WTC11 (cell line): ENCODE measurements at regions of chr20 and their contacts with region 1.

Region 1: GRCh38 chr20:21615617-21616080 is 89.8 kb upstream of the PAX1 start:
- DNase-seq: peak; percentile 81
- ATAC-seq: peak; percentile 96
- H3K4me3 Mint-ChIP-seq: no peak overlapping the region
- H3K27ac Mint-ChIP-seq: no peak overlapping the region
- H3K4me1 Mint-ChIP-seq: peaks cover 4% of the 10 kb centered on the region
- H3K27me3 Mint-ChIP-seq: peaks cover 22% of the 10 kb centered on the region
- CTCF ChIP-seq: peak; percentile 41

Region 2: DNA sequence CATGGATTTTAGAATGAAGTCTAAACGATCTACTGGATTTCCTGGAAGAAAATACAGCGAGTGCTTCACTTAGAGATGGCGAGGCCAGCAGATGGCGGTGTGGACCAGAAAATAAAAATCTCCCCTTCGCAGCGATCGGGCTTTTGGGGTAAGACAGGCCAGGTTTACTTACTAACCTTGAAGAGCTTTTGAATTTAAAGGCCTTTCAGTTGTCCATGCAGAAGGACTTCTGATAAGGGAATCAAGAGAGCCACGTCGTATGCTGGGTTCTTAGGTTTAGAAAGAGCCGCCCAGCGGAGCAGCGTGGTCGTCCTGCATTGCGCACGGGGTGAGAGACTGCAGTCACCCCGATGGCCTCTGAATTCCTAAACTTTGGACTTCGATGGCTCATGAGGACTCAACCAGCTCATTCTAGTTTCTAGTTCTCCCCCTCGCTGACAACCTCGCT is 778.1 kb before region 1 on chr20:
- CTCF ChIA-PET with region 1: interaction called, 10 read pairs
- POLR2A ChIA-PET with region 1: no interaction called
- DNase-seq: peak; percentile 68
- ATAC-seq: peak; percentile 78
- H3K4me3 Mint-ChIP-seq: peak overlapping the region; percentile 46
- H3K27ac Mint-ChIP-seq: no peak overlapping the region
- H3K4me1 Mint-ChIP-seq: peaks cover 6% of the 10 kb centered on the region; the same call in 1 of the 2 replicates
- H3K27me3 Mint-ChIP-seq: peaks cover 3% of the 10 kb centered on the region
- CTCF ChIP-seq: peak; percentile 67

Region 3: GRCh38 chr20:21520702-21521595 is 94.7 kb before region 1 on chr20:
- CTCF ChIA-PET with region 1: interaction called, 15 read pairs
- POLR2A ChIA-PET with region 1: no interaction called
- DNase-seq: peak; percentile 70
- ATAC-seq: peak; percentile 43
- H3K4me3 Mint-ChIP-seq: peak overlapping the region; percentile 69
- H3K27ac Mint-ChIP-seq: no peak overlapping the region
- H3K4me1 Mint-ChIP-seq: peaks cover 71% of the 10 kb centered on the region
- H3K27me3 Mint-ChIP-seq: peaks cover 96% of the 10 kb centered on the region
- CTCF ChIP-seq: no peak

Region 4: GRCh38 chr20:21571841-21572690 is 43.6 kb before region 1 on chr20:
- CTCF ChIA-PET with region 1: interaction called, 17 read pairs
- POLR2A ChIA-PET with region 1: no interaction called
- DNase-seq: peak; percentile 33
- ATAC-seq: peak; percentile 19; the same call in 1 of the 2 replicates
- H3K4me3 Mint-ChIP-seq: no peak overlapping the region
- H3K27ac Mint-ChIP-seq: no peak overlapping the region
- H3K4me1 Mint-ChIP-seq: peaks cover 37% of the 10 kb centered on the region
- H3K27me3 Mint-ChIP-seq: no peaks in the 10 kb centered on the region; the same call in 1 of the 2 replicates
- CTCF ChIP-seq: peak; percentile 97

Region 5: DNA sequence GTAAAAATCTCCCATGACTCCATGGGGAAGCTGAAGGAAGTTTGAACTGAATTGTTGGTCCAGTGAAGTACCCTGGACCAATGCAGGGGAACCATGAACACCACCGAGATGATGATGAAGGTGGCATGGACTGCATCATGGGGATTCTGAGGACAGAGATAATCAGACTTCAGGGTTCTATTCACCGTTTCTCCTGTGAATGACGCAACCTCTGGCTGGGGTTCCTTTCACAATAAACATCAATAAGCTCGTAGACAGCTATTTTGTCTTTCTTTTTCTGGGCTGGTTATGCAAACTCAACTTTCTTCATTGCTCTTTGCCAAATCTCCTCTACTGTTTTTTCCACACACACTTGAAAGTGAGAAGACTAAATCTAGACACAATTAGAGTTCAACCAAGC is 13.8 kb before region 1 on chr20:
- CTCF ChIA-PET with region 1: interaction called, 10 read pairs
- POLR2A ChIA-PET with region 1: no interaction called
- DNase-seq: no peak
- ATAC-seq: no peak
- H3K4me3 Mint-ChIP-seq: no peak overlapping the region
- H3K27ac Mint-ChIP-seq: no peak overlapping the region
- H3K4me1 Mint-ChIP-seq: no peaks in the 10 kb centered on the region
- H3K27me3 Mint-ChIP-seq: peaks cover 6% of the 10 kb centered on the region
- CTCF ChIP-seq: no peak